A549 (cell line): ENCODE measurements at regions of chr11 and their contacts with region 1.

Region 1: GRCh38 chr11:65911682-65912568 is 6.9 kb downstream of the C11orf68 start:
- DNase-seq: peak; percentile 68 to 79
- ATAC-seq: peak; percentile 7 to 24; a peak in 3 of 6 replicates
- H3K4me3 ChIP-seq: no peak overlapping the region
- H3K27ac ChIP-seq: peak overlapping the region; percentile 51 to 100
- H3K4me1 ChIP-seq: peaks cover 61% of the 10 kb centered on the region
- CTCF ChIP-seq: peak; percentile 43; the same call in 2 of the 3 replicates
- EP300 ChIP-seq: no peak
- POLR2A ChIP-seq: no peak
- RAD21 ChIP-seq: peak; percentile 38 to 54; a peak in 4 of 5 replicates

Region 2: DNA sequence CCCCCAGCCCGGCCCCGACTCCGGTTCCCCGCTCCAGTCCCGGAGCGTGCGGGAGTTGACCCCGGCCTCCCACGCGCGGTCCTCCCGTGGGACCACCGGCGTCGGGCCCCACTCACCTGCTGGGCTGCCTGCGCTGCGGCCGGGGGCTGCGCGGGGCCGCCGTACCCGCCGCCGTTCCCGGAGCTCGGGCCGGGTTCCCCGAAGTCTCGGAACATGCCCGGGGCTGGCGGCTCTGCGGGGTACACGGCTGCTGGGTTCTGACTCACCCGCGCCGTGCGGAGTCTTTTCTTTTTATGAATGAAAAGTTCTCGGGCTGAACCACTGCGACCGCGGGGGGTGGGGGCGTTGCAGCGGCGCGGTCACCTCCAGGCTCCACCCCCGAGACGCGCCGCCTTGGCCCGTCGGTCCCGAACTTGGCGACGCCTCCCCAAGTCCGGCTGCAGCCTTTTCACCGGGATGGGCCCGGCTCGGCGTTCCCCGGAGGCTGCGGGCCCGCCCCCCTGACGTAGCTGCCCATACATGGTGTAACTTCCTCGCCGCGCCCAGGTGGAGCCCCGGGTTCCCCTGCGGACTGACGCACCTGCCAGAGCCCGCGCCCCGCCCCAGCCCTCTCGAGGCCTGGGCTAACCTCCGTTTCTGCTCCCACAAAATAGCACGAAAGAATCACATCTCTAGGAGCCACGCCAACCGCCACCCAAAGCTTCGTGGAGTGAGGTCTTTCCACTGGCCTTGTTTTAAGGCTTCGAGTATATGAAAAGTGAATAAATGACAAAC is 11.6 kb before region 1 on chr11 and contains the start of gene FOSL1:
- CTCF ChIA-PET with region 1: interaction called, 618 read pairs
- POLR2A ChIA-PET with region 1: interaction called, 43 read pairs
- DNase-seq: peak; percentile 91 to 99
- ATAC-seq: peak; percentile 74 to 79
- H3K4me3 ChIP-seq: peak within 1 kb of the TSS; percentile 93
- H3K27ac ChIP-seq: peak within 1 kb of the TSS; percentile 97
- H3K4me1 ChIP-seq: peaks cover 59% of the 10 kb centered on the region
- CTCF ChIP-seq: no peak
- EP300 ChIP-seq: no peak
- POLR2A ChIP-seq: peak; percentile 78
- RAD21 ChIP-seq: no peak; a peak in 1 of 5 replicates
- polyA plus RNA-seq, gene FOSL1: 6.7 and 9.6 TPM in 2 replicates

Region 3: GRCh38 chr11:66523462-66524010 is 611.6 kb after region 1 on chr11:
- CTCF ChIA-PET with region 1: no interaction called
- POLR2A ChIA-PET with region 1: no interaction called
- DNase-seq: no peak
- ATAC-seq: 0 out of 6 replicates have a peak, but pooled peaks of 1 of the 2 experiments have one; percentile 17
- H3K4me3 ChIP-seq: no peak overlapping the region
- H3K27ac ChIP-seq: no peak overlapping the region
- H3K4me1 ChIP-seq: no peaks in the 10 kb centered on the region
- CTCF ChIP-seq: no peak
- EP300 ChIP-seq: no peak
- POLR2A ChIP-seq: no peak
- RAD21 ChIP-seq: no peak